Posterior vena cava (tissue), 2 donors: ENCODE measurements at regions of chr5 and their contacts with region 1.

Region 1: GRCh38 chr5:79514391-79515105 is 614 bp upstream of the HOMER1 start:
- DNase-seq: peak; percentile 96

Region 2: DNA sequence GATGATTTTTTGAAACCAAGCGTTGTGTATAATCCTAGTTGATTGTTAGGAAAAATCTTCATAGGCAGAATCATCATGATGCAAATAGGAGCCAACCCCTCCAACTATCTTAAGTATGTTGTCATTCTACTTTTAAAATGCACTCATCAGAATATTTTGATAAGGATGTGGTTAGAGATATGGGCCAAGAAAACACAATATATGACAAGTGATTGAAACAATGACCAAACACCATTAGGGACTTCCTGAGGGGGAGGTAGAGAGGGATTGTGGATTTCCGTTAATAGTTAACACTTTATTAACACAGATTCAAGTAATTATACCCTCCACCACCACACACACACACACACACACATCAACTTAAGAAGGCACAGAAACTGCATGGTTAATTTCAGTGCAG is 672.8 kb before region 1 on chr5:
- intact Hi-C with region 1: no loop called
- DNase-seq: no peak

Region 3: DNA sequence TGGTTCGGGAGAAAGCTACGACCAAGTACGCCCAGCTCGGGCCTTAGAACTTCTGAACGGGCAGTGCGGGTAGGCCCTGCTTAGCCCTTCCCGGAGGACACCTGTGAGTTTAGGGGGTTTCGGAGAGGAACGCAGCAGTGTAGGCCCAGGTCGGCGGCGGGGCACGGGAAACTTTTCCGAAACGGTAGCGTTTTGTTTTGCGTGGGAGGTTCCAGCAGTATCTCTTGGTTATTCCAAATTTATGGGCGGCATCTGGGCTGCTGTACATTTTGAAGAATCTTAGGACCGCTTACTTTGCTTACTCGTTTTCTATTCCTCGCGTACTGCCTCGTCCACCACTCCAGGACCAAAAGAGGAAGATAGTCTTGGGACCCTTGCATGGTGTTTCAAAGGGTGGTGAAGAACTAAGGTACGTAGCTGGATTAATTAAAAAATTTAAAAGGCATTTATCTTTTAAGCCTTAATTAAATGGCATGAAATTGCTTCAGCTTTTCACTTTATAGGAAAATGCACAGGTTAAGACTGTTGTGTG is 98.2 kb after region 1 on chr5:
- intact Hi-C with region 1: loop called in 1 of 2 experiments (anchors 10 kb)
- DNase-seq: no peak